ENCODE measurements at regions of chr14 and their contacts with region 1.

Region 1: GRCh38 chr14:66824251-66824650 is 316.3 kb downstream of the GPHN start:
- DNase-seq: no peak
- ATAC-seq: no peak
- H3K4me3 ChIP-seq: no peak overlapping the region
- H3K27ac ChIP-seq: no peak overlapping the region
- H3K4me1 ChIP-seq: no peaks in the 10 kb centered on the region
- H3K27me3 ChIP-seq: no peaks in the 10 kb centered on the region
- CTCF ChIP-seq: no peak

Region 2: GRCh38 chr14:66735853-66736252 is 88.4 kb before region 1 on chr14:
- CTCF ChIA-PET with region 1: no interaction called
- POLR2A ChIA-PET with region 1: no interaction called
- intact Hi-C with region 1: loop called (anchors 5 kb)
- DNase-seq: peak; percentile 7
- ATAC-seq: peak; percentile 98
- H3K4me3 ChIP-seq: no peak overlapping the region
- H3K27ac ChIP-seq: no peak overlapping the region
- H3K4me1 ChIP-seq: no peaks in the 10 kb centered on the region
- H3K27me3 ChIP-seq: no peaks in the 10 kb centered on the region
- CTCF ChIP-seq: no peak

Region 3: DNA sequence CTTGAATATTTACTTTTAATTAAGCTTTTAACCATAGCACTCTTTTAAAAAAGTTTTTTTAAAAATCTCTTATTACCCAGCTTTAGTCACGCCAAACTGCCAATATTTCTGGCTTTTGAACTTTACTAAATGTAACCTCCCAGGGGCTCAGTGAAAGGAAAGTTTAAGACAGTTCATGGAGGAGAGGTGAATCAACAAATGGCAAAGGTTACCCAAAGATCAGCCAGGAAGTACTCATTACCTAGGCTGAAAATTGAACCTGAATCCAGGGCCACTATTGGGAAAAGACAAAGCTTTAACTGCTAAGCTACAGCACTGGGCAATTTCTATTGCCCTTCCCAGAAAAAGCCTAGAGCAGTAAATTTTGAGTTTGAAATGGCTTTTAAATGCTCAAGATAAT is 34.1 kb before region 1 on chr14:
- CTCF ChIA-PET with region 1: no interaction called
- POLR2A ChIA-PET with region 1: no interaction called
- intact Hi-C with region 1: no loop called
- DNase-seq: no peak
- ATAC-seq: no peak
- H3K4me3 ChIP-seq: no peak overlapping the region
- H3K27ac ChIP-seq: no peak overlapping the region
- H3K4me1 ChIP-seq: no peaks in the 10 kb centered on the region
- H3K27me3 ChIP-seq: no peaks in the 10 kb centered on the region
- CTCF ChIP-seq: no peak

Measured in PC-3 (cell line).